ENCODE measurements at regions of chr1 and their contacts with region 1.

Region 1: DNA sequence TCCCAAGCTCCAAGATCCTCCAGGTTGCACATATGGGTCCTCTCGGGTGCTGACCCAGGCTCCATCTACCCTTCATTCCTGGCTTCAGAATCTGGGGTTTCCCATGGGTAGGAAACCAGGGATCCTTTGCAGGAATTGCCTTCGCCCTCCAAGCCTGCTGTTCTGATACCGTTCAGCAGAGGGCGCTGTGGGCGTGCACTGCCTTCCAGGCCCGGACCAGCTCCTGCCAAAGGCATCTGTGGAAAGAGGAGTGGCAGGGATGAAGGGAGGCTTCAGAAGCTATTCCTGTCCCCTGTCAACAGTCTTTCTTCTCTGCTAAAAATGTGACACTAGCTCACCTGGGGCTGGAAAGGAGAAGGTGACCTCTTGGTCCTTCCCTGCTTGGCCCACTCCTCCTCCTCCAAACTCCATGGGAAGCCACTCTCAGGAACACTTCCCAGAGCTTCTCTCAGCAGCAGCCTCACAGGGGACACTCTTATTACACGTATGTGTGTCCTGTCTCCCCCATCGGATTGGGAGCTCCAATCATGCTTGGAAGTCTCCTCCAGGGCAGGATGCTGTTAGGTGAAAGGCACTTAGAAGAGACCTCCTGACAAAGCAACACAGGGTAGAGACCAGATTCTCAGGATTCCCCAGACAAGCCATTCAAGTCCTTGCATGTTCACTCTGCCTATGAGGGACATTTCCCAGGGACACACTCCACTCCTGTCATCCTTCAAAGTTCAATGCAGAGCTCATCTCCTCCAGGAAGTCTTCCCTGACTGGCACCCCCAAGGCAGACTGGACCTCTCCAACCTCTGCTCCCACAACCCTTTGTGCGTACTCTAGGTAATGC is 71.3 kb downstream of the VWA5B1 start:
- DNase-seq: peak; percentile 43 to 75 (median 69)
- H3K4me3 ChIP-seq: no peak overlapping the region
- H3K27ac ChIP-seq: no peak overlapping the region
- H3K4me1 ChIP-seq: peaks cover 7% of the 10 kb centered on the region
- H3K27me3 ChIP-seq: no peaks in the 10 kb centered on the region
- CTCF ChIP-seq: peak in 2 of 3 donors; percentile 57 to 62
- EP300 ChIP-seq: no peak
- POLR2A ChIP-seq: no peak

Region 2: DNA sequence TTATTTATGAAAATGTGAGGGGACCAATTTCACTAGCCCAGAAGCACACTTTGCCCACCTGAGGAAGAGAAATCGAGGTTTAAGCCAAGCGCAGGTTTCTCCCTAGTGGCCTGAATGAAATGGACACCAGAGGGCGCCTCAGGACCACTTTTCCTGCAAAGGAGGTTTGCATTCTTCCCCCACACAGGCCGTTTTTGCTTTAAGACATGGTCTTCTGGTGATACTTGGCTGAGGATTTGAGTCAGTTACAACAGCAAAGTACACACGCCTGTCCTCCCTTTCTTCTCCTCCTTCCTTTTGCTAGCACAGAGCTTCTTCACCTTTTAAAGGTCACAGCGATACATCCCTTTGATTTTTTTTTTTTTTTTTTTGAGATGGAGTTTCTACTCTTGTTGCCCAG is 444.0 kb before region 1 on chr1:
- intact Hi-C with region 1: loop called in 1 of 4 experiments (anchors 10 kb)
- DNase-seq: peak; percentile 84 to 95 (median 91)
- H3K4me3 ChIP-seq: no peak overlapping the region
- H3K27ac ChIP-seq: no peak overlapping the region
- H3K4me1 ChIP-seq: no peaks in the 10 kb centered on the region
- H3K27me3 ChIP-seq: no peaks in the 10 kb centered on the region
- CTCF ChIP-seq: peak; percentile 86 to 96 (median 95)
- EP300 ChIP-seq: no peak
- POLR2A ChIP-seq: no peak

Region 3: DNA sequence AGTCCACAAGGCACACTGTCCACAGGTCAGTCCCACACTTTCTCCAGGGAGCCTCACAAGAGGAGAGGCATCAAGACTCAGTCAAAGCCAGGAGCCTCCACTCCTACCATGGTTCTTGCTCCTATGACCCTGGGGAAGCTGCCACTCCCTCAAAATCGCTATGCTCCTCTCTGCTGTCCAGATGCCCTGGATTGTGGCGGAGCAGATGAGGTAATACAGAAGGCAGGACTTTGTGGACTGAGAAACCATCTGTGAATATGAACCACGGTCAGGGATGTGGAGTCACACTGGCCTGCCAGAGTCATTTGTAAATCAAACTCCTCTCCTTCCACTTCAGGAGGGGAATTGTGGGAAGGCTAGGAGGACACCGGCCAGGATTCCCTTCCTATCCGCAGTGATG is 50.7 kb before region 1 on chr1:
- intact Hi-C with region 1: loop called in 1 of 4 experiments (anchors 2 kb)
- DNase-seq: no peak
- H3K4me3 ChIP-seq: no peak overlapping the region
- H3K27ac ChIP-seq: no peak overlapping the region
- H3K4me1 ChIP-seq: no peaks in the 10 kb centered on the region
- H3K27me3 ChIP-seq: no peaks in the 10 kb centered on the region
- CTCF ChIP-seq: no peak
- EP300 ChIP-seq: no peak
- POLR2A ChIP-seq: no peak

Region 4: DNA sequence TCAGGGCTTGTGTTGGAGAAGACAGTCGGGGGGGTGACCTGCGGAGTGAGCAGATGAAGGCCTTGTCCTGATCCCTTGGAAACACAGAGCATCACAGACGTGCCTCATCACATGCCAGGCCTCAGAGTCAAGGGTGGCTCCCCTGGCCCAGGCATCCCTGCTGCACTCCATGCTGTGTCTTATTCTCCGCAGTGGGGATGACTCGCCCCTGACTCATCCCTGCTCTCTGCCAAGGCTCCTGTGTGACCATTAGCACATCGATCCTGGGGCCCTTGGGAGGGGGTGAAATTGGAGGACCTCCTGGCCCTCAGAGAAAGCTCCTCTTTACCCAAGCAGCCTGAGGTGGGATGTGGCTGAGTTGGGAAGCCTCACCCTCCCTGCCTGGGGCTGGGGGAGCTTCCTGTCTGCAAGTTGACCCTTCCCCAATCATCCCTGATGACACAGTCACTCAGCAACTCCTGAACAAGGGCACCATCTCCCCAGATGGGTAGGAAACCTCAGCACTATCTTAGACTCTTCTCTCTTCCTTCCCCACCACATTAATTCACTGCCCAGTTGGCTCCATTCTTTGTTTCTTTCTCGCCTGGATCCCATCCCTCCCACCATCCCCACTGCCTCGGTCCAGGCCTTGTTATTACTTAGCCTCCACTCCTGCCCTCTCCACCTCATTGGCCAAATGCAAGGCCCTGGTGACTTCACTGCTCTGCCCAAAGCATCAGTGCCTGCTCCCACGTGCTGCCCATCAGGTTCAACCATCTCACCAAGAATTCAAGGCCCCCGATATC is 49.4 kb after region 1 on chr1:
- intact Hi-C with region 1: no loop called
- DNase-seq: no peak
- H3K4me3 ChIP-seq: no peak overlapping the region
- H3K27ac ChIP-seq: no peak overlapping the region
- H3K4me1 ChIP-seq: no peaks in the 10 kb centered on the region
- H3K27me3 ChIP-seq: no peaks in the 10 kb centered on the region
- CTCF ChIP-seq: no peak
- EP300 ChIP-seq: no peak
- POLR2A ChIP-seq: no peak

Measured in ovary (tissue), 10 donors.